Vagina (tissue), 2 donors: ENCODE measurements at regions of chr18 and their contacts with region 1.

Region 1: GRCh38 chr18:6158958-6159357 is 255.8 kb downstream of the L3MBTL4 start:
- DNase-seq: no peak
- H3K4me3 ChIP-seq: no peak overlapping the region
- H3K27ac ChIP-seq: no peak overlapping the region
- H3K4me1 ChIP-seq: no peaks in the 10 kb centered on the region
- H3K27me3 ChIP-seq: no peaks in the 10 kb centered on the region
- CTCF ChIP-seq: no peak
- POLR2A ChIP-seq: no peak

Region 2: DNA sequence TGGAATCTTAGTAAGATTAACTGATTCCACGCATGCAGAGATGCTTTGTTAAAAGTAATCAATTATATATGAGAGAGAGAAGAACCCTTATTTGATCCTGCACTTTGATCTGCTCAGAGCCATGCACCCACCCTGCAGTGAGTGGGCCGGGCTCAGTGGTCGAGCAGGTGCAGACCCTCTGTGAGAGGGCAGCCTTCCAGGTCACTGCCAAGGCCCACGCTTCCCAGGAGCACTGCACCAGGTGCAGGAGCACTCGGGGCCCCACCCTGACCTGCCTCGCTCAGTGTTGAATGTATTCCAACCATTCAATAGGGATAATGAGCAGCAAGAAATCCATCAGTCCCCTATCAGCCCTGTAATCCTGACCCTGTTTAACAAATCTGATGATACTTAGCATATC is 390.5 kb before region 1 on chr18:
- intact Hi-C with region 1: loop called (anchors 5 kb)
- DNase-seq: no peak
- H3K4me3 ChIP-seq: no peak overlapping the region
- H3K27ac ChIP-seq: no peak overlapping the region
- H3K4me1 ChIP-seq: no peaks in the 10 kb centered on the region
- H3K27me3 ChIP-seq: no peaks in the 10 kb centered on the region
- CTCF ChIP-seq: no peak
- POLR2A ChIP-seq: no peak

Region 3: DNA sequence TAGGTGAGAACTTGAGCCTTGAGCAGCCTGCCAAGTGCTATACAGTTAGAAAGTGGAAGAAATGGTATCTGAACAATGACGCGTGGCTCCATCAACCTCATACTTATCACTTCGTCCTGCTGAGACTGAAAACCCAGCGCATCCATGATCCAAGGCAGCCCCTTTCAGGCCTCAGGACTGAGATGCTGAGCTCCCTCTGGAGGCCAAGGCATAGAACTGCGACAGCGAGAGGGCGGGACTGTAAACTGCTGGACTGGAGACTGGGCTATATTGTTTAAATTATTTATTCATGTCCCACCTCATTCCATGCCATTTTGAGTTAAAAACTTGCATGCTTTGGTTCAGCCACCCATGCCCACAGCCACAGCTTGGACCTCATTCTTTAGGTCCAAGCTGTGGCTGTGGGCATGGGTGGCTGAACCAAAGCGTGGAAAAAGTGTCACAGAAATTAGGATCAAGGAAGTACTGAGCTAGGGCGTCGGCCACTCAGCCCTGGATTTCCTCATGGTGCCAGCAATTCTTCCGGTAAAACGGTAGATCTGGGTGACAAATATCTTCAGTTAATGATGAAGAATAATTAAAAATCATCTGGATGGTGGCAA is 60.3 kb after region 1 on chr18:
- intact Hi-C with region 1: no loop called
- DNase-seq: no peak
- H3K4me3 ChIP-seq: no peak overlapping the region
- H3K27ac ChIP-seq: no peak overlapping the region
- H3K4me1 ChIP-seq: no peaks in the 10 kb centered on the region
- H3K27me3 ChIP-seq: no peaks in the 10 kb centered on the region
- CTCF ChIP-seq: no peak
- POLR2A ChIP-seq: no peak

Region 4: GRCh38 chr18:7059276-7059675 is 900.3 kb after region 1 on chr18:
- intact Hi-C with region 1: no loop called
- DNase-seq: no peak
- H3K4me3 ChIP-seq: no peak overlapping the region
- H3K27ac ChIP-seq: no peak overlapping the region
- H3K4me1 ChIP-seq: no peaks in the 10 kb centered on the region
- H3K27me3 ChIP-seq: no peaks in the 10 kb centered on the region
- CTCF ChIP-seq: no peak
- POLR2A ChIP-seq: no peak

Region 5: GRCh38 chr18:7414459-7414858 is 1255.5 kb after region 1 on chr18:
- intact Hi-C with region 1: no loop called
- DNase-seq: no peak
- H3K4me3 ChIP-seq: no peak overlapping the region
- H3K27ac ChIP-seq: no peak overlapping the region
- H3K4me1 ChIP-seq: peaks cover 6% of the 10 kb centered on the region
- H3K27me3 ChIP-seq: no peaks in the 10 kb centered on the region
- CTCF ChIP-seq: no peak
- POLR2A ChIP-seq: no peak